A549 (cell line): ENCODE measurements at regions of chr20 and their contacts with region 1.

Region 1: GRCh38 chr20:2206957-2207769 is 88.6 kb upstream of the TGM3 start:
- DNase-seq: peak; percentile 73 to 90
- ATAC-seq: peak; percentile 96 to 99
- H3K4me3 ChIP-seq: peak overlapping the region; percentile 57
- H3K27ac ChIP-seq: peak overlapping the region; percentile 63 to 85
- H3K4me1 ChIP-seq: no peaks in the 10 kb centered on the region
- CTCF ChIP-seq: peak; percentile 86
- EP300 ChIP-seq: no peak
- POLR2A ChIP-seq: no peak
- RAD21 ChIP-seq: peak; percentile 83 to 95

Region 2: DNA sequence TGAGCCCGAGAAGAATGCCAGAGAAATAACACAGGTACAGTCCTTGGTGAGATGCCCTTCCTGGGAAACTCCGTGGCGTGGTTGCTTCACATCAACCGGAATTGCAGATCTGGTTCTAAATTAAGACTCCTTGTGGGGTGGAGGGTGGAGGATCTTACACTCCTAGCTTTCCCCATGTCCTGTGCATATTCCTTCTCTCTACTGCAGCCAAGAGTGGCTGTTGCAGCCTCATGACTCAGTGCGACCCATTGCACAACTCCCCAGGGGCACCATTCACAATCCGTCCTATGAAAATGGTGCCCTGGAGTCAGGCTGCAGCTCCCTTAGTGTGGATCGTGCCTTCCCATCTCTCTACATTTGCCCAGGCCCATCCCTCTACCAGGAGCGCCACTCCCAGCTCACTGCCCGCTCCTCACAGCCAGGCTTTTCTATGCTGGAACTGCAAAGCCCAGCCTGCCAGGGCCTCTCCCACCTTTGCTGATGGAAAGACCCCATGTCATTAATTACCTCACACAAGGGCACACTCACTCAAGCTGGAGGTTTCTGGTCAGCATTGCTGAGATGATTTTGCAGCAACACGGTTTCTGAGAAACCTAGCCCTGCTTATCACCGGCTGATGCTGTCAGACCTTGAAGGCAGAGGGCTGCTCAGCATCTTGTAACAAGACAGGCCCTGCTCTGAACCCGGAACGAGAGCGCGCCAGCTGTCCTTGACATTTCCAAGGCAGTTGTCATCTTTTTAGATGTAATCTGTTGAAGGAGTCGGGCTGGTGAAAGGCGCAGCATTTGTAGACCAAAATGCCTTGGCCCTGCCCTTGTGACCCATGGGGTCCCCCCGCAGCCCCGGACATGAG is 272.2 kb before region 1 on chr20:
- CTCF ChIA-PET with region 1: no interaction called
- POLR2A ChIA-PET with region 1: no interaction called
- DNase-seq: no peak
- ATAC-seq: peak; percentile 49 to 63; a peak in 5 of 6 replicates
- H3K4me3 ChIP-seq: no peak overlapping the region
- H3K27ac ChIP-seq: no peak overlapping the region
- H3K4me1 ChIP-seq: peaks cover 12% of the 10 kb centered on the region
- CTCF ChIP-seq: no peak
- EP300 ChIP-seq: no peak
- POLR2A ChIP-seq: no peak
- RAD21 ChIP-seq: no peak

Region 3: GRCh38 chr20:2086177-2086979 is 120.8 kb before region 1 on chr20:
- CTCF ChIA-PET with region 1: no interaction called
- POLR2A ChIA-PET with region 1: no interaction called
- DNase-seq: no peak
- ATAC-seq: peak; percentile 51 to 53; a peak in 3 of 6 replicates
- H3K4me3 ChIP-seq: no peak overlapping the region
- H3K27ac ChIP-seq: no peak overlapping the region
- H3K4me1 ChIP-seq: no peaks in the 10 kb centered on the region
- CTCF ChIP-seq: no peak
- EP300 ChIP-seq: no peak
- POLR2A ChIP-seq: no peak
- RAD21 ChIP-seq: 0 out of 5 replicates have a peak, but pooled peaks of 1 of the 2 experiments have one; percentile 4

Region 4: DNA sequence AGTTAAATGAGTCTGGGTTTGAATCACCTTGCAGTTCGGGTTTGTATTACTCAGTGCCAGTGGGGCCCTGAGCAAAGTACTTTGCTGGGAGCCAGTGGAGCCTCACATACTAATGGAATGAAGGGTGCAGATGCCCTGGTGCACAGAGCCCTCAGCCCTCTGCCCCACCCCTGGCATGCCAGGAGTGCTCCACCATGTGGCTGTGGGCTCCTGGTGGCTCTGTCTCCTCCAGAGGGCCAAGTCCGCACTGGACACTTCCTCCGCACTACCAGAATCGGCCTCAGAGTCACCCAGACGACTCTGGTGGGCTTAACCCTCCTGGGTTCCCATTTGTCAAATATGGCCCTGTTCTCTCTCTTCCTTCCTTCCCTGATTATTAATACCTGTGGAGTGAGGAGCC is 11.5 kb before region 1 on chr20:
- CTCF ChIA-PET with region 1: interaction called, 37 read pairs
- POLR2A ChIA-PET with region 1: interaction called, 5 read pairs
- DNase-seq: no peak
- ATAC-seq: peak; percentile 72 to 82
- H3K4me3 ChIP-seq: no peak overlapping the region
- H3K27ac ChIP-seq: no peak overlapping the region
- H3K4me1 ChIP-seq: no peaks in the 10 kb centered on the region
- CTCF ChIP-seq: no peak
- EP300 ChIP-seq: no peak
- POLR2A ChIP-seq: no peak
- RAD21 ChIP-seq: no peak

Region 5: DNA sequence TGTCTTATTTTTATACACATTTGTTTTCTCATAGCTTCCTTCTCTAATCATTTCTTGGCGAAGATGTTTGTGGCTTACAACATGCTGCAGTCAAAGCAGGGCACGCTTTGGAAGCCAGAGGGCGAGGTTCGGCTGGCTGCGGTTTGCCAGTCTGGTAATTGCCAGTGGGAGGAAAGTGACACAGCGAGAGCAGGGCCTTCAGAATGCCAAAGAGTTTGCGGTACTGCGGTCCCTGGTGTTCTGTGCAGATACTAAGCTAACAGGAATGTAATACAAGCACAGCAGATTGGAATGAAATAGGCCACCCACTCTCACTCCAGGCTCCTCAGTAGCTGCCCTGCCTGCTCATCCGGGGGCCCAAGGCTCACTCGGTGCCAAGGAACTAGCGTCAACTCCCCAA is 29.9 kb after region 1 on chr20:
- CTCF ChIA-PET with region 1: interaction called, 15 read pairs
- POLR2A ChIA-PET with region 1: no interaction called
- DNase-seq: no peak
- ATAC-seq: peak in 1 of 2 experiments; percentile 35; a peak in 2 of 6 replicates
- H3K4me3 ChIP-seq: no peak overlapping the region
- H3K27ac ChIP-seq: no peak overlapping the region
- H3K4me1 ChIP-seq: no peaks in the 10 kb centered on the region
- CTCF ChIP-seq: no peak
- EP300 ChIP-seq: no peak
- POLR2A ChIP-seq: no peak
- RAD21 ChIP-seq: no peak

Region 6: GRCh38 chr20:2387180-2387577 is 180.0 kb after region 1 on chr20:
- CTCF ChIA-PET with region 1: interaction called, 36 read pairs
- POLR2A ChIA-PET with region 1: no interaction called
- DNase-seq: peak; percentile 46 to 51
- ATAC-seq: peak in 1 of 2 experiments; percentile 79; a peak in 3 of 6 replicates
- H3K4me3 ChIP-seq: no peak overlapping the region
- H3K27ac ChIP-seq: no peak overlapping the region
- H3K4me1 ChIP-seq: no peaks in the 10 kb centered on the region
- CTCF ChIP-seq: peak; percentile 20; the same call in 2 of the 3 replicates
- EP300 ChIP-seq: no peak
- POLR2A ChIP-seq: no peak
- RAD21 ChIP-seq: peak in 1 of 2 experiments; percentile 32; a peak in 2 of 5 replicates

Region 7: DNA sequence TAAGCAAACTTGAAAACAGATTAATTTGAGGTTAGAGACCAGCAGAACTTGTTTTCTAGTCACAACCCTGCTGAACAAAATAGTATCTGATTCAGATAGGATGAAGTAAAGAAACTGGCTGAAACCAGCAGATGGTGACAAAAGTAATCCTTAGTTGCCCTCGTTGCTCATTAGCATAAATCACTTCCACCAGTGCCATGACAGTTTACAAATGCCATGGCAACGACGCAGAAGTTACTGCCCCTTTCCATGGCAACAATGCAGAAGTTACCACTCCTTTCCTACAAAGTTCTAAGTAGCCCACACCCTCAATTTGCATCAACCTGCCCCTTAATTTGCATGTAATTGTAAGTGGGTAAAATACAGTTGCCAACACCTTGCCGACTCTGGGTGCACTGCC is 239.7 kb after region 1 on chr20:
- CTCF ChIA-PET with region 1: interaction called, 117 read pairs
- POLR2A ChIA-PET with region 1: no interaction called
- DNase-seq: no peak
- ATAC-seq: no peak
- H3K4me3 ChIP-seq: no peak overlapping the region
- H3K27ac ChIP-seq: no peak overlapping the region
- H3K4me1 ChIP-seq: no peaks in the 10 kb centered on the region
- CTCF ChIP-seq: no peak
- EP300 ChIP-seq: no peak
- POLR2A ChIP-seq: no peak
- RAD21 ChIP-seq: no peak